OCI-LY7 (cell line): ENCODE measurements at regions of chr15 and their contacts with region 1.

Region 1: GRCh38 chr15:65318870-65319356 is 14.4 kb downstream of the RNU5B-1 start:
- DNase-seq: peak; percentile 75
- H3K4me3 ChIP-seq: no peak overlapping the region
- H3K27ac ChIP-seq: no peak overlapping the region
- H3K4me1 ChIP-seq: no peaks in the 10 kb centered on the region
- CTCF ChIP-seq: peak; percentile 90

Region 2: GRCh38 chr15:65133548-65134200 is 185.2 kb before region 1 on chr15 and contains the start of gene PDCD7:
- CTCF ChIA-PET with region 1: no interaction called
- POLR2A ChIA-PET with region 1: no interaction called
- intact Hi-C with region 1: no loop called
- DNase-seq: peak; percentile 95
- H3K4me3 ChIP-seq: peak within 1 kb of the TSS; percentile 87
- H3K27ac ChIP-seq: peak within 1 kb of the TSS; percentile 64
- H3K4me1 ChIP-seq: peaks cover 13% of the 10 kb centered on the region
- CTCF ChIP-seq: no peak
- total RNA-seq, gene PDCD7: 27.2 and 34.6 TPM in 2 replicates

Region 3: GRCh38 chr15:65258375-65259262 is 60.3 kb before region 1 on chr15:
- CTCF ChIA-PET with region 1: no interaction called
- POLR2A ChIA-PET with region 1: no interaction called
- intact Hi-C with region 1: no loop called
- DNase-seq: no peak
- H3K4me3 ChIP-seq: no peak overlapping the region
- H3K27ac ChIP-seq: no peak overlapping the region
- H3K4me1 ChIP-seq: no peaks in the 10 kb centered on the region
- CTCF ChIP-seq: no peak

Region 4: DNA sequence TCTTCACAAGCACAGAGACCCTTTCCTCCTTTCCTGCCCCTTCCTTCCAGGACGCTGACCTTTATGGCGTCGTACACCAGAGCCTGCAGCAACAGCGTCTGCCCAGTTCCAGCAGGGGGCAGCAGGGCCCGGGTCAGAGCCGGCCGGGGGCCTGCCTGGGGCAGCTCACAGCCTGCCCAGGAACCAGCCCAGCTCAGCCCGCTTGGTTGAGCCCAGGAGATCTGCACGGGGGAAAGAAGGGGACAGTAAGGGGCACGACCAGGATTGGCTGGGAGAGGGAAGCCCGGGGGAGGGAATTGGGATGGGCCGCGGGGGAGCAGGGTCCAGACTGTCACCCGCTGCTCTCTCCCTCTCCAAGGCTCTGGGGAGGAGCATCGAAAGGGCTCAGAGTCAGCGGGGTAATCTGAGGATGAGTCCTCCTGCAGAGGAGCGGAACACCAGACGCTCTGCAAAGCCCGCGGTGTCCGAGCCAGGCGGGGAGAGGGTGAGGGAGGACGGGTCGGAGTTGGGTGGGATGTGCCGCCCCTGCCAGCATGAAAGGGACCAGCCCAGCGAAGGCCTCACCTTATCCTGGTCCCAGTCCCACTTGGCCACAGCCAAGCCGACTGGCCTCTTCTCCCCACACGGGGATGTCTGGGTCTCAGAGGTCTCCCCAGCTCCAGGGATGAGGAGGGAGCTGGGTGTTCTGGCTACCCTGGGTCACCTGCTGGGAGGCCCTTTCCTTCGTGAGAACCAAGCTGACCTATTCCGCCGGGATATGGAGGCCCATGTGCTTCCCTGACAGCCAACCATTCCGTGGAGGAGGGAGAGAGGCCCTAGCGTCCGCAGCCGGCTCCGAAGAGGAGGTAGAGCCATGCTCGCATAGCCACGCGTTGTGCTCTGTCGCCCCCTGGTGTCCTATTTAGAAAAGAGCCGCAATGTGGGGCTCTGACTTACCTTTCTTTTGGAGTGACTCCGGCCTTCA is 66.3 kb after region 1 on chr15:
- CTCF ChIA-PET with region 1: interaction called, 5 read pairs
- POLR2A ChIA-PET with region 1: interaction called, 3 read pairs
- intact Hi-C with region 1: loop called (anchors 1 kb)
- DNase-seq: peak; percentile 85
- H3K4me3 ChIP-seq: peak overlapping the region; percentile 54
- H3K27ac ChIP-seq: no peak overlapping the region
- H3K4me1 ChIP-seq: peaks cover 8% of the 10 kb centered on the region
- CTCF ChIP-seq: peak; percentile 90

Region 5: DNA sequence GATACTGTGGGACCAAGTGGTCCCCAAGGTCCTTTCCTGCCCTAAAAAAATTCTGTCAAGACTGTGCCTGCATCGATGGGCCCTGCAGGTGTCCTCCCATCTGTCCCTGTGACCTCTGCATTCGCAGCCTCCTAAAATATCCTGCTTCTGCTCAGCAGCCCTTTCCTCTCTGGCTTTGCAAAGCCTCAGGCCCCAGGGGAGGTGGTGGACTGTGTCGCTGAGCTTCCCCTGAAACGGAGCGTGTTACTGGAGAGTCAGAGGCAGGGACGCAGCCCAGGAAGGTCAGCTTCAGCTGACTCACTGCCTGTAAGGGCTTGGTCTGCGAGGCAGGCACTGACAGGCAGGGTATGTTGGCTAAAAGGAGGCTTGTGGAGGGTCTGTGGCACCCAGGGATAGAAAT is 660.4 kb after region 1 on chr15:
- CTCF ChIA-PET with region 1: no interaction called
- POLR2A ChIA-PET with region 1: no interaction called
- intact Hi-C with region 1: no loop called
- DNase-seq: peak; percentile 49
- H3K4me3 ChIP-seq: no peak overlapping the region
- H3K27ac ChIP-seq: no peak overlapping the region
- H3K4me1 ChIP-seq: peaks cover 24% of the 10 kb centered on the region
- CTCF ChIP-seq: no peak

Region 6: DNA sequence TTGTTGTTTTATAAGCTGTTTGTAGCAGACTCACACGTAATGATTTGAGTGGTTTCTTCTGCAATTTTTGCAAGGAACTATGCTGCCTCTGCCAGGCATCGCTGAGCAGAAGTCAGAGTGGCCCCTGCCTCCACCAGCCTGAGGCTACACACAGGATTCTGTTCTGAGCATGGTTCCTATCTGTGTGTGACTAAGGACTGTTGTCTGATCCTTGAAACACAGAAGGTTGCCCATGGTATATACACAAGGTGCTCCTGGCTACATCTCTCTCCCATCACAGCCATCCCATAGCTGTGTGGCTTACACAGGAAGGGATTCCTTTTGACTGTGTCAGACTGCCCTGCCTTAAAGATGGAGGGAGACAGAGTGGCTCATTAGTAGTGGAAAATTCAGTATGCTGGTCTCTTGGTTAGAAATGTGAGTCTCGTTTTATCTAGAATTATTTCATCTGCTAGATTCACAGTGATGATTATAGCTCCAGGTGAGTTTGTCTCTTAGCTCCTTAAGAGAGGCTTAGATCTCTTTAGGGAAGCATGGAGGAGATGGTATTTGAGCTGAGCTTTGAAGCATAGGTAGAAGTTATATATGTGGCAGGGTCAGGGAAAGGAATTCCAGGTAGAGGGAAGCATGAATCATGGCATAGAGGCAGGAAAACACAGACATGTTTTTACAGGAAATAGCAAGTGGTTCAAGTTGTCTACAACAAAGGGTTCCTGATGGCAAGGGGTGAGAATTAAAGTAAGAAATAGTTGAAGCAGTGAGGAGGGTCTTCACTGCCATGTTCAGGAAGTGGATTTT is 1141.1 kb after region 1 on chr15:
- CTCF ChIA-PET with region 1: no interaction called
- POLR2A ChIA-PET with region 1: no interaction called
- intact Hi-C with region 1: no loop called
- DNase-seq: no peak
- H3K4me3 ChIP-seq: no peak overlapping the region
- H3K27ac ChIP-seq: no peak overlapping the region
- H3K4me1 ChIP-seq: peaks cover 31% of the 10 kb centered on the region
- CTCF ChIP-seq: no peak